ENCODE measurements at regions of chr22 and their contacts with region 1.

Region 1: DNA sequence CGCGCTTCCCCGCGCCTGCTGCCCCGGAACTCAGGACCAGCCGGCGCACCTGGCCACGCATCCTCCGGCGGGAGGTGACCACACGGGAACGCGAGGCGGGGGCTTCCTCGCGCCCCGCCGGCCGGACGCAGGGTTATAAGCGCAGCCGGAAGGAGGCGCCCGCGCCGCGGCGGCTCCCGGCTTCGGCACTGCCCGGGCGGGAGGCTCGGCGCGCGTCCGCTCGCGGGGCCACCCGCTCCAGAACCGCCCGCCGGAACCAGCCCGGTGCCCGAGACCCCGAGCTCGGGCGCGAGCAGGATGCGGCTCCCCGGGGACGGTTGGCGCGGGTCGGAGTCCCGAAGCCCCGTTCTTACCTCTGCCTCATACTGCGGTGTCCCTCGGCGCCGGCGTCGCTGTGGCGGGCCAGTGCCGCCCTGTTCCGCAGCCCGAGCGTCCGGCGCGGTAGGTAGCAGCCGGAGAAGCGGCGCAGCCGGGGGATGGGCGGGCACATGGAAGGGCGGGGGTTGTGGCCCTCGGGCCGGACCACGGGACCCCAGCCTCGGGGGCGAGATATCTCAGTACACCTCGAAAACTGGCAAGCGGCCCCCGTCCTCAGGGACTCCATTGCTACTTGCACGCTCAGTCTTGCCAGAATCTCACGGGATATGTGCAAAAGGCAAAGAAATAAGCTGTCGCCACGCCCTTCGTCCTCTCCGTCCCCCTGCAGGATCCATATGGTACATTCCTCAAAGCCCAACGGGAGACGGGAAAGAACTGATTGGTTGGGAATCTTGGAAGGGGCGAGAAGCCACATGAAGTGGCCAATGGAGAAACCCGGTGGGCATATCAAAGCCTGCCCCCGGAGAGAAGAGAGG is 23.1 kb downstream of the MICAL3 start:
- DNase-seq: peak; percentile 88
- ATAC-seq: peak; percentile 66
- H3K4me3 Mint-ChIP-seq: peak overlapping the region; percentile 92
- H3K27ac Mint-ChIP-seq: peak overlapping the region; percentile 99
- H3K4me1 Mint-ChIP-seq: peaks cover 85% of the 10 kb centered on the region
- H3K27me3 Mint-ChIP-seq: no peaks in the 10 kb centered on the region
- CTCF ChIP-seq: no peak

Region 2: GRCh38 chr22:17785185-17786184 is 215.8 kb before region 1 on chr22:
- CTCF ChIA-PET with region 1: no interaction called
- POLR2A ChIA-PET with region 1: interaction called, 3 read pairs
- intact Hi-C with region 1: loop called (anchors 2 kb)
- DNase-seq: peak; percentile 65
- ATAC-seq: peak; percentile 30
- H3K4me3 Mint-ChIP-seq: no peak overlapping the region
- H3K27ac Mint-ChIP-seq: peak overlapping the region; percentile 59
- H3K4me1 Mint-ChIP-seq: peaks cover 34% of the 10 kb centered on the region
- H3K27me3 Mint-ChIP-seq: no peaks in the 10 kb centered on the region
- CTCF ChIP-seq: no peak

Region 3: DNA sequence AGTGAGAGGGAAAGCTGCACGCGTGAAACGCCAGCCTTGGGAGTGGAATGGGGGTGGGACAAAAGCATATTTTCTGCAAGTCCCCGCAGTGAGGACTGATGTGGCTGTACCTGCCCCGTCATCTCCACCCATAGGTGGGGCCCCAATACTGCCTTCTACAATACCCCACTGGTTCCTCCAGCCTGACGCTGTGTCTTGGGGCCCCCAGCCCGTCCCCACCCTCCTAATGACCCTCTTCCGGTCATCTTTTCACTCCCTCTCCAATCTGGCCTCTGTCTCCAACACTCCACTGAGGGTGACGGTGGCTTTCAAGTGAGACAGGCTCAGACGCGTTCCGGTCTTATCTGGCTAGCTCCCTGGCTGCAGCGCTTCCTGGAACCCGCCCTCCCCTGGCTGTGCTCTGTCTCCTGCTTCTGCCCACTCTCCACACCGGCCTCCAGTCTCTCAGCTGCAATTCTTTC is 81.1 kb before region 1 on chr22:
- CTCF ChIA-PET with region 1: interaction called, 4 read pairs
- POLR2A ChIA-PET with region 1: interaction called, 10 read pairs
- intact Hi-C with region 1: no loop called
- DNase-seq: no peak
- ATAC-seq: peak; percentile 50
- H3K4me3 Mint-ChIP-seq: peak overlapping the region; percentile 29
- H3K27ac Mint-ChIP-seq: peak overlapping the region; percentile 33
- H3K4me1 Mint-ChIP-seq: no peaks in the 10 kb centered on the region
- H3K27me3 Mint-ChIP-seq: no peaks in the 10 kb centered on the region
- CTCF ChIP-seq: no peak

Region 4: GRCh38 chr22:18012531-18012930 is 11.3 kb after region 1 on chr22:
- CTCF ChIA-PET with region 1: interaction called, 7 read pairs
- POLR2A ChIA-PET with region 1: interaction called, 28 read pairs
- intact Hi-C with region 1: loop called (anchors 1 kb)
- DNase-seq: no peak
- ATAC-seq: no peak
- H3K4me3 Mint-ChIP-seq: no peak overlapping the region
- H3K27ac Mint-ChIP-seq: no peak overlapping the region
- H3K4me1 Mint-ChIP-seq: peaks cover 47% of the 10 kb centered on the region
- H3K27me3 Mint-ChIP-seq: no peaks in the 10 kb centered on the region
- CTCF ChIP-seq: no peak

Measured in activated B cell treated with CpG ODN at 0.5 μM for 24 hours (primary cell).